PC-9 (cell line): ENCODE measurements at regions of chr12 and their contacts with region 1.

Region 1: DNA sequence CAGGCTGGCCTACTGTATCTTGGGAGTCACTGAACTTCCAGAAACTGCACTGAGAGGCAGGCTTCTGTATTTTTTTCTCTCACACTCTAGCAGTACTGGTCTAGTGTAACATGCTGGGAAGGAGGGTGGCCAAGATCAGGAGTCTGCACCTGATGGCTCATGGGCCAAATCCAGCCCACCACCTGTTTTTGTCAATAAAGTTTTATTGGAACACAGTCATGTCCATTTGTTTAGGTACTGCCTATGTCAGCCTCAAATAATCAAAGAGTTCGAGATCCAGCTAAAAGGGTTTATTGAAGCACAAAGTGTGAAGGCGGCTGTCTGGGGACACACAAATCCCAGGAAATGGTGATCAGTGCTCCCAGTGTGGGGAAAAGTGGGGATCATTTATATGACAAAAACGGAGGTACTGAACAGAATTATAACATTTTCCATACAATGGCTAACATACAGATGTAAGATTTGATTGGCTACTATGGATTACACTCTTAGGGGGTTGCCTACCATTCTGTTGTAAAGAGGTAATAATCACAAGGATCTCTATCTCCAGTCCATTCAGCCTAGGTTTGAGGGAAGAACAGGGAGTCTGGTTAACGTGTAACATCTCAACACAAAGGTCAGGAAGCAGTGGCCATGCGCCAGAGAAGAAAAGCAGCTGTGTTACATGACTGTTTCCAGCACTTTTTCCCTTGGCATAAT is 12.9 kb downstream of the USP30 start:
- DNase-seq: no peak
- H3K4me3 ChIP-seq: no peak overlapping the region
- H3K27ac ChIP-seq: no peak overlapping the region
- H3K4me1 ChIP-seq: no peaks in the 10 kb centered on the region
- H3K27me3 ChIP-seq: no peaks in the 10 kb centered on the region
- CTCF ChIP-seq: no peak

Region 2: DNA sequence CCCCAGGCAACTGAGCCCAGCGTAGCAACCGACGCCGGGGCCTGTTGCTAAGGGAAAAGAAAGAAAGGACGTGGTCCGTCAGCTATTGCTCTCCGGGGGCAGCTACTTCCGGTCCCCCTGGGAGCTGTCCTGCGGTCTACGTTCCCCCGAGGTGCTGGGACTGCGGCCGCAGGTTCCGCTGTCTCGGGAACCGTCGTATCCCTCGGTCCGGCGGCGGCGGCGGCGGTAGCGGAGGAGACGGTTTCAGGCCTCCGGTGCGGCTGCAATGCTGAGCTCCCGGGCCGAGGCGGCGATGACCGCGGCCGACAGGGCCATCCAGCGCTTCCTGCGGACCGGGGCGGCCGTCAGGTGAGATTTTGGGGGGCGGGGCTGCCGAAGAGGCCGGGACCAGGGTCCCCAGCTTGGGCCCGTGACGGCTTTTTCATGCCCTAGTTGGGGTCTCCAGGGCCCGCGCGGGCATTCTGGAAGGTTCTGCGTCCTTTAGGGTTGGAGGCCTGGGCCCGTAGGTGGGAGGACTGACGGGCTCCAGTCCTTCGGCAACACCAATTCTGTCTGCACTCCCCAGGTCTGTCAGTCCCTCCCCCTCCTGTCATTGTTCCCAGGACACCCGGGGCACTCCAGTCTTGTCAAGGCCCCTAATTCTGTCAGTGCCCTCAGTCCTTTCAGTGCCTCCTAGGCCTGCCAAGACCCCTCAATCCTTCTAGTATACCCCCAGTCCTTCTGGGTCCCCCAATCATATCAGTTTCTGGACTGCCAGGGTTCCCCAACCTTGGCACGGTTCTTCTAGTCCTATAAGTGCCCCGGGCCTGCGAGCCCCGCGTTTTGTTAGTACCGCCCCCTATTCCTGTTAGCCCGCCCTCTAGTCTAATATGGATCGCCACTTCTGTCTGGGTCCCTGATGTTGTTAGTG is 12.6 kb before region 1 on chr12 and contains the start of gene USP30:
- CTCF ChIA-PET with region 1: interaction called, 12 read pairs
- POLR2A ChIA-PET with region 1: no interaction called
- intact Hi-C with region 1: no loop called
- DNase-seq: peak; percentile 71 to 76
- H3K4me3 ChIP-seq: peak within 1 kb of the TSS; percentile 79
- H3K27ac ChIP-seq: no peak within 1 kb of the TSS
- H3K4me1 ChIP-seq: peaks cover 11% of the 10 kb centered on the region; the same call in 1 of the 2 replicates
- H3K27me3 ChIP-seq: no peaks in the 10 kb centered on the region
- CTCF ChIP-seq: no peak
- total RNA-seq, gene USP30: 12.0 and 12.5 TPM in 2 replicates